ENCODE measurements at regions of chr1 and their contacts with region 1.

Region 1: GRCh38 chr1:210311726-210312493 is 16.8 kb upstream of the HHAT start:
- DNase-seq: no peak
- ATAC-seq: no peak
- H3K4me3 Mint-ChIP-seq: peak overlapping the region; percentile 72
- H3K27ac Mint-ChIP-seq: peak overlapping the region; percentile 38; the same call in 1 of the 2 replicates
- H3K4me1 Mint-ChIP-seq: peaks cover 4% of the 10 kb centered on the region
- H3K27me3 Mint-ChIP-seq: peaks cover 11% of the 10 kb centered on the region
- CTCF ChIP-seq: no peak

Region 2: GRCh38 chr1:209860293-209860881 is 451.5 kb before region 1 on chr1:
- CTCF ChIA-PET with region 1: interaction called, 16 read pairs
- POLR2A ChIA-PET with region 1: no interaction called
- DNase-seq: peak; percentile 89
- ATAC-seq: peak; percentile 70
- H3K4me3 Mint-ChIP-seq: no peak overlapping the region
- H3K27ac Mint-ChIP-seq: no peak overlapping the region
- H3K4me1 Mint-ChIP-seq: peaks cover 33% of the 10 kb centered on the region
- H3K27me3 Mint-ChIP-seq: no peaks in the 10 kb centered on the region
- CTCF ChIP-seq: peak; percentile 76

Region 3: DNA sequence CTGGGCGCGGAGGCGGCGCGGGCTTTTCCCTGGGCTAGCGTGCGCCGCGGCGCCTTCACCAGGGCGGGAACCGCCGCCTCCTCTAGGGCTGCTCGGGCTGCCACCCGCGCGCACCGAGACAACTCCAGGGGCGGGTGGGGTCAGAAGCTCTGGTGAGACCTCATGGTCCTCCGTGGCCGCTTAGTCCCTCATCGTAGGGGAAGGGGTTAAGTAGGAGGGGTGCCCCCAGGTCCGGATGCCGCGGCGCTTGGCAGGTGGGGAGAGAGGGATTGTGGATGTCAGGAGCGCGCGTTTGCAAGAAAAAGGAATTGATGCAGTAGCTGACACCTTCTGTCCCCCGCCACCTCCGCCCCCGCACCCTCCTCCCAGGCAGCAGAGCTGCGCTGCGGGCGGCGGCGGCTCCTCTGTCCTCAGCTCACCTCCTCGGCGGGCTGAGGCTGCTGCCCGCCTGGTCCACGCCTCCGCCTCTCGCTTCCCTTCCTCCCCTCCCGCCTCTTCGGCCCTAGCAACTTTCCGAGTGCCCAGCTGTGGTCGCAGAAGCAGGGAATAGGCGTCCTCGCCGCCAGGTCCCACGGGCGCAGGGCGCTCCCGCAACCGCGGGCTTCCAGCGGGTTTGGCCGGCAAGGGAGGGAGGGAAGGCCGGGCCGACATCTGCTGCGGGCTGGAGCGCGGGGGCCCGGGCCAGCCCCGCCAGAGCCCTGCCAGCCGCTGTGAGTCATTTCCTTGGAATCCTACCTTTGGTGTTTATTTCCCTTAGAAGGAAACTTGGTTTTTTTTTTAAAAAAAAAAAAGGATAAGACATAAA is 78.5 kb before region 1 on chr1:
- CTCF ChIA-PET with region 1: interaction called, 16 read pairs
- POLR2A ChIA-PET with region 1: no interaction called
- DNase-seq: peak; percentile 42
- ATAC-seq: peak; percentile 43
- H3K4me3 Mint-ChIP-seq: peak overlapping the region; percentile 65
- H3K27ac Mint-ChIP-seq: no peak overlapping the region
- H3K4me1 Mint-ChIP-seq: peaks cover 33% of the 10 kb centered on the region
- H3K27me3 Mint-ChIP-seq: peaks cover 66% of the 10 kb centered on the region
- CTCF ChIP-seq: no peak

Region 4: GRCh38 chr1:210262167-210262896 is 49.6 kb before region 1 on chr1:
- CTCF ChIA-PET with region 1: interaction called, 18 read pairs
- POLR2A ChIA-PET with region 1: no interaction called
- DNase-seq: no peak
- ATAC-seq: no peak
- H3K4me3 Mint-ChIP-seq: no peak overlapping the region
- H3K27ac Mint-ChIP-seq: no peak overlapping the region
- H3K4me1 Mint-ChIP-seq: peaks cover 19% of the 10 kb centered on the region
- H3K27me3 Mint-ChIP-seq: no peaks in the 10 kb centered on the region; the same call in 1 of the 2 replicates
- CTCF ChIP-seq: no peak

Region 5: GRCh38 chr1:210301615-210302000 is 10.3 kb before region 1 on chr1:
- CTCF ChIA-PET with region 1: interaction called, 26 read pairs
- POLR2A ChIA-PET with region 1: no interaction called
- DNase-seq: no peak
- ATAC-seq: no peak
- H3K4me3 Mint-ChIP-seq: no peak overlapping the region
- H3K27ac Mint-ChIP-seq: no peak overlapping the region
- H3K4me1 Mint-ChIP-seq: peaks cover 24% of the 10 kb centered on the region
- H3K27me3 Mint-ChIP-seq: no peaks in the 10 kb centered on the region
- CTCF ChIP-seq: no peak

Measured in WTC11 (cell line).